Activated T-helper 1 cell treated with anti-CD3 and anti-CD28 coated beads, Interleukin-12 subunit alpha, Interleukin-12 subunit beta, Interleukin-2, Interleukin-4 antibody, amounts not matched to agents 30 ng/mL and 10 ng/mL and 1 ng/mL, durations not matched to agents 14 hours and 24 hours and 36 hours (primary cell): ENCODE measurements at regions of chr15 and their contacts with region 1.

Region 1: DNA sequence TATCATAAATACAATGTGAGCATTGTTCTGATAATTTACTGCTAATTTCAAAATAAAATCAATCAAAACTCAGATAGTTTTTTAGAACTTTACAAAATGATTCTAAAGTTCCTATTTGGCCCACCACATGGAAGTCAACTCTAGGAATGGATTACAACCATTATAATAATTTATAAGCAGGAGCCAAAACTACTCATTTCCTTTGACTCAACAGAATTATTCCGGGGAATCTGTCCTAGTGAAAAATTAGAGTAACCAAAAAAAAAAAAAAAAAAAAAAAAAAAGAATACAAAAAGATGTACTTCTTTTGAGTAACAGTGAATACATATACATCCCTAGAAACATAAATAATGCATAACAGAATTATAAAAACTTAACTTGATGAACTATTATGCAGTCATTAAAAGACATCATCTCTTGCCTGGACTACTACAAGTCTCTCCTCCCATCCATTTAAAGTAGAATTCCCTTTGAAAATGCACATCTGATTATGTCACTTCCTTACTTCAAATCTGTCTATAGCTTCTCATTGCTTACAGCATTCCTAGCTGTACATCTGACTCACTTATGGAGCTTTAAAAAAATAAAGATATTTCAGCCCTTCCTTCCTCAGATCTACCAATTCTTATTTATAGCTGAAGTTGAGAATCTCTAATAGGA is 43.4 kb downstream of the HDGFL3 start:
- DNase-seq: no peak
- H3K4me3 Mint-ChIP-seq: peak overlapping the region; percentile 66
- H3K27ac Mint-ChIP-seq: peak overlapping the region; percentile 87
- H3K4me1 Mint-ChIP-seq: peaks cover 63% of the 10 kb centered on the region
- H3K27me3 Mint-ChIP-seq: peaks cover 1% of the 10 kb centered on the region

Region 2: GRCh38 chr15:83011271-83012075 is 152.8 kb before region 1 on chr15 and contains the start of gene C15orf40:
- intact Hi-C with region 1: loop called (anchors 2 kb)
- DNase-seq: peak; percentile 84
- H3K4me3 Mint-ChIP-seq: peak within 1 kb of the TSS; percentile 99
- H3K27ac Mint-ChIP-seq: peak within 1 kb of the TSS; percentile 98
- H3K4me1 Mint-ChIP-seq: peaks cover 50% of the 10 kb centered on the region
- H3K27me3 Mint-ChIP-seq: no peaks in the 10 kb centered on the region
- total RNA-seq, gene C15orf40: 24.2 and 29.0 TPM in 2 replicates

Region 3: DNA sequence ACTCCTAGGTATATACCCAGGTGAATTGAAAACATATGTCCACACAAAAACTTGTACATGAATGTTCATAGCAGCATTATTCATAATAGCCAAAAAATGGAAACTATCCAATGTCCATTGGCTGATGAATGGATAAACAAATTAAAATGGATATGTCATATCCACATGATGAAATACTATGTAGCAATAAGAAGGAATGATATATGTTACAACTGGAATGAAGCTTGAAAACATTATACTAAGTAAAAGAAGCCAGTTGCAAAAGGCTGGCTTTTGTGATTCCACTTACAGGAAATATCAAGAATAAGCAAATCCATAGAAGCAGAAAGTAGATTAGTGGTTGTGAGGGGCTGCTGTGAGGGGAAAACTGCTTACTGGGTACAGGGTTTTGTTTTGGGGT is 86.6 kb after region 1 on chr15:
- intact Hi-C with region 1: no loop called
- DNase-seq: no peak
- H3K4me3 Mint-ChIP-seq: no peak overlapping the region
- H3K27ac Mint-ChIP-seq: no peak overlapping the region
- H3K4me1 Mint-ChIP-seq: no peaks in the 10 kb centered on the region
- H3K27me3 Mint-ChIP-seq: peaks cover 23% of the 10 kb centered on the region